ENCODE measurements at regions of chr17 and their contacts with region 1.

Region 1: DNA sequence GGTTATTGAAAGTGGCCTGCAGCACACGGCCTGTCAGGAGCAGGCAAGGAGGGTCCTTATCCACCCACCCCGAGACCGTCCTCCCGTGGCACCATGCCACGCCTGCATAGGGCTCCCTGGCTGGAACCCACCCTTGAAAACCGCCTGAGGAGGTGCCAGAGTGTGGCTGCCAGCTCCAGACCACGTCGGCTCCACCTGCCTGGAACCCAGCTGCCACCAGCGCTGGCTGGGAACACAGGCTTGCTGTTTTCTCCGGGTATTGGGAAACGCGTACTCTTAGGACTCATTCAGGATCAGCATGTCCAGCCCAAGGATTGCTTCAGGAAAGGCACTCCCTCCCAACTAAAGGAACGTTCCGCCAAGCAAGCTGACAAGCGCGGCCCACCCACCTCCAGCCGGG is 6.7 kb downstream of the ARL16 start:
- DNase-seq: no peak
- ATAC-seq: no peak
- H3K4me3 ChIP-seq: no peak overlapping the region
- H3K27ac ChIP-seq: no peak overlapping the region
- H3K4me1 ChIP-seq: peaks cover 0 to 19% (median under 1%) of the 10 kb centered on the region in 12 donors
- H3K27me3 ChIP-seq: no peaks in the 10 kb centered on the region
- CTCF ChIP-seq: no peak
- POLR2A ChIP-seq: no peak

Region 2: DNA sequence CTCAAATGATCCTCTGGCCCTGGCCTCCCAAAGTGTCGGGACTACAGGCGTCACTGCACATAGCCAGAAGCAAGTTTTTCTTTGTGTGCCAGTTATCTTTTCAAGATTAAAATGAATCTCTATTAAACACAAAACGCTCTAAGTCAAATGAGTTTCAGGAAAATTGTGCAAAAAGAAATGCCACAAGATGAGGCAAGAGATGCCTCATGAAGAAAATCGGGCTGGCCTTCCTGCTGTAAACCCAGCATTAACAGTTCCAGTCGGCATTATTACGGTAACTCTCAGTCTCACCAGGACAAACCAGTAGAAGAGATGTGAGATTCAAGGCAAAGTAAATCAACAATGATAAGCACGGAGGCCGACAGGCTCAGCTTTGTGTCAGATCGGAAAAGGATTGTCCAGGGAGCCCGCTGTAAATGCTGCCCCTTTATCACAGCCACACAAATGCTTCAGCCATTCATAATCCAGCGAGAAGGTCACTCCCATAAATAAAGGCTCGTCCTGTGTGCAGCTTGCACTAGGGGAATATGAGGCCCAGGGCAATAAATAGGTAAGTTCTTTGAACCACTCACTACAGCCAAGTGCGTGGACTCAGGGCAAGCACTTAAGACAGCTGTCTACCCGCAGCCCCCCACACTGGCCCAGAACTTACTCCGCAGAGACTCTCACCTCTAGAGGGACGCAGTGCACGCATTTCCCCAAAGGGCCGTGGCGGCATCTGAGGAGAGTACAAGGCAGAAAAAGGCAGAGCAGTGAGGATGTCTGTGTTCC is 67.2 kb before region 1 on chr17:
- intact Hi-C with region 1: no loop called
- DNase-seq: peak in 2 of 5 donors; percentile 8 to 64
- ATAC-seq: peak; percentile 42 to 66 (median 50)
- H3K4me3 ChIP-seq: no peak overlapping the region
- H3K27ac ChIP-seq: peak overlapping the region in 6 of 12 donors; percentile 19 to 75 (median 54)
- H3K4me1 ChIP-seq: peaks cover 0 to 42% (median 17%) of the 10 kb centered on the region in 12 donors
- H3K27me3 ChIP-seq: no peaks in the 10 kb centered on the region
- CTCF ChIP-seq: no peak
- POLR2A ChIP-seq: no peak

Region 3: GRCh38 chr17:81621494-81622130 is 55.3 kb before region 1 on chr17:
- intact Hi-C with region 1: no loop called
- DNase-seq: peak in 2 of 5 donors; percentile 27 to 29
- ATAC-seq: peak; percentile 68 to 85 (median 70)
- H3K4me3 ChIP-seq: no peak overlapping the region
- H3K27ac ChIP-seq: peak overlapping the region in 7 of 12 donors; percentile 0 to 54 (median 22)
- H3K4me1 ChIP-seq: peaks cover 0 to 15% (median 7%) of the 10 kb centered on the region in 12 donors
- H3K27me3 ChIP-seq: no peaks in the 10 kb centered on the region
- CTCF ChIP-seq: no peak
- POLR2A ChIP-seq: no peak

Region 4: GRCh38 chr17:81711814-81712467 is 35.0 kb after region 1 on chr17 and contains the start of gene SLC25A10:
- intact Hi-C with region 1: loop called in 1 of 10 experiments (anchors 2 kb)
- DNase-seq: peak; percentile 70 to 86 (median 76)
- ATAC-seq: peak; percentile 33 to 83 (median 74)
- H3K4me3 ChIP-seq: peak within 1 kb of the TSS; percentile 59 to 98 (median 82)
- H3K27ac ChIP-seq: peak within 1 kb of the TSS in 10 of 12 donors; percentile 8 to 77 (median 56)
- H3K4me1 ChIP-seq: peaks cover 6 to 35% (median 27%) of the 10 kb centered on the region in 12 donors
- H3K27me3 ChIP-seq: no peaks in the 10 kb centered on the region
- CTCF ChIP-seq: peak in 4 of 12 donors; percentile 14 to 32 (median 20)
- POLR2A ChIP-seq: peak in 1 of 2 donors; percentile 52
- total RNA-seq, gene SLC25A10: 7.0 to 13.6 (median 8.2) TPM

Region 5: DNA sequence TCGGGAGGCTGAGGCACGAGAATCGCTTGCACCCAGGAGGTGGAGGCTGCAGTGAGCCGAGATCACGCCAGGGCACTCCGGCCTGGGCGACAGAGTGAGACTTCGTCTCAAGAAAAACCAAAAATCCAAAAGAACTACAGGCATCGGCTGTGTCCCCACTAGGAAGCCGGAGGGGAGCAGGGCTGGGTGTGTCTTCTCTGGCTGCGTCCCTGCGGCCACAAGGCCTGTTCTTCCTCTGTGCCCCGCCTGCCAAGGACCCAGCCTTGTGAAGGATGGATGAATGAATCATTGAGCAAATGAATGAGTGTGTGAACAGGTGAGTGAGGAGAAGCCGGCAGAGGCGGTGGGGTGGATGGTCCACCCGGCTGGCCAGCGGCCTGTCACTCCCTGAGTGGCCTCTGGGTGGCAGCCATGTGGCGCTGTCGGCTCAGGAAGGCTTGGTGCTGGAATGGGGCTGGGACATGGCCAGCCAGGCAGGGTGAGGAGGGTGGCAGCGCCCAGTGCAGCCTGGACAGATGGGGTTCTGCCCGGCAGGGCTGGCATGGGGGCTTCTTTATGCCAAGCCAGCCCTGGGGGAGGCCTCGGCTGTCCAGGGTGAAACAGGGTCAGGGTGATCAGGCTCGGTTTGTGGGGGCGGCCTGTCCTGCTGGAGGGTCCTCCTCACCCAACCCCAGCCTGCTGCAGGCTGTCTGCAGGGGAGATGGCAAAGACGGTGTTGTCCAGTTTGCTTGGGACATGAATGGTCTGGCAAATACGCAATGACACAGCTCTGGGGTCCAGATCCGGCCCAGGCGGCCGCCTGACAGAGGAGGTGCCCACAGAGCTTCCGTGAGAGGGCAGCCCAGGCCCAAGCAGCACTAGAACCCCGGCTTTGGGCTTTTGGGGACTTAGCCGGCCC is 56.9 kb after region 1 on chr17:
- intact Hi-C with region 1: no loop called
- DNase-seq: peak; percentile 79 to 91 (median 86)
- ATAC-seq: peak; percentile 79 to 92 (median 90)
- H3K4me3 ChIP-seq: no peak overlapping the region
- H3K27ac ChIP-seq: no peak overlapping the region
- H3K4me1 ChIP-seq: peaks cover 0 to 31% (median 4%) of the 10 kb centered on the region in 12 donors
- H3K27me3 ChIP-seq: peaks cover 0 to 38% (median 0%) of the 10 kb centered on the region in 9 donors
- CTCF ChIP-seq: peak; percentile 81 to 96 (median 91)
- POLR2A ChIP-seq: no peak

Region 6: DNA sequence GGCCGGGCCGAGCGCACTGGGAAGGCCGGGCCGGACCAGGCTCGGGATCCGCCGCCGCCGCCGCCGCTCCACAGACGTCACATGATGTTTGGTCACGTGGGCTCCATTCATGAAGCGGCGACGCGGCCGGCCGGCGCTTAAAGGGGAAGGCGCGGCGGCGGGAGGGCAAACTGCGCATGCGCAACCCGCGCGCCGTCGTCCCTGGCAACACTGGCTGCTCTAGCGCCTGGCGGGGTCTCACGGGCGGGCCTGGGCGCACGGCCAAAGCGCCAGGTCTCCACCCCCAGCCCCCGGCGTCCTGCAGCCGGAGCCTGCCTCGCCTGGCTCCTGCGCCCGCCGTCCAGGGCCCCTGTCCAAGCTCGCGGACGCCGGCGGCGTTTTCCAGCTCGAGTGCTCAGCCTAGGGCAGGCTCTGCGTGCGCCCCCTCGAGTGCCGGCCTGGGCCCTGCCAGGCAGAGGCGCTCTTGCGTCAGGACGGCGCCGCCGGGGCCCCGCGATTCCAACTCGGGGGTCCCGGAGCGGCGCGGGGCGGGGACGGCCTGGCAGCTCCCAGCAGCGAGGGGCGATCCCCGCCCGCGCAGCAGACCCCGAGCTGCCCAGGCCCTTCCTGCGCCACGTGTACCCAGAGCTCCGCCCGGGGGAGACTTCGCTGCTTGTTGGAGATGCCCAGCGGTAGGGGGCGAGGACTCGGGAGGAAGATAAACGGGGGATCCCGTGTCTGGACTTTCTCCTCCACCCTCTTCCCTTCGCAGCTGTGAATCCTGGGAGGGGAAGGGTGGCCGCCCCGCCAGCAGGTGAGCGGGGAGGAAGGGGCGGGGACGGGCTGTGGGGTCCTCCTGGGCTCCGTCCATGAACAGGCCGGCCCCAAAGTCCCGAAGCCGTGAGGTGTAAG is 251.0 kb after region 1 on chr17 and contains the start of gene MAFG:
- intact Hi-C with region 1: no loop called
- DNase-seq: peak; percentile 91 to 96 (median 93)
- ATAC-seq: peak; percentile 33 to 70 (median 59)
- H3K4me3 ChIP-seq: peak within 1 kb of the TSS; percentile 84 to 98 (median 94)
- H3K27ac ChIP-seq: peak within 1 kb of the TSS; percentile 86 to 99 (median 95)
- H3K4me1 ChIP-seq: peaks cover 21 to 51% (median 41%) of the 10 kb centered on the region in 12 donors
- H3K27me3 ChIP-seq: peaks cover 0 to 14% (median 0%) of the 10 kb centered on the region in 9 donors
- CTCF ChIP-seq: peak in 7 of 12 donors; percentile 11 to 51 (median 31)
- POLR2A ChIP-seq: peak; percentile 27 to 69
- total RNA-seq, gene MAFG: 14.3 to 30.5 (median 18.0) TPM